H1 (cell line): ENCODE measurements at regions of chr17 and their contacts with region 1.

Region 1: GRCh38 chr17:76968707-76969597 is 100.7 kb downstream of the MGAT5B start:
- DNase-seq: peak; percentile 92 to 96
- H3K4me3 ChIP-seq: peak overlapping the region; percentile 43 to 62 (median 49)
- H3K27ac ChIP-seq: peak overlapping the region; percentile 87
- H3K4me1 ChIP-seq: peaks cover 8 to 25% (median 15%) of the 10 kb centered on the region in 4 experiments
- H3K27me3 ChIP-seq: 0 out of 7 replicates have a peak, but pooled peaks cover 0 to 2% (median 0%) of the 10 kb centered on the region in 4 experiments
- CTCF ChIP-seq: no peak
- EP300 ChIP-seq: peak in 1 of 2 experiments; percentile 75; a peak in 1 of 3 replicates
- POLR2A ChIP-seq: peak in 1 of 2 experiments; percentile 88; a peak in 2 of 3 replicates
- RAD21 ChIP-seq: peak in 1 of 2 experiments; percentile 0; a peak in 1 of 4 replicates

Region 2: GRCh38 chr17:76957678-76958464 is 11.1 kb before region 1 on chr17:
- CTCF ChIA-PET with region 1: interaction called, 4 read pairs
- POLR2A ChIA-PET with region 1: interaction called, 11 read pairs
- DNase-seq: no peak
- H3K4me3 ChIP-seq: no peak overlapping the region
- H3K27ac ChIP-seq: no peak overlapping the region
- H3K4me1 ChIP-seq: peaks cover 0 to 17% (median 11%) of the 10 kb centered on the region in 4 experiments; a peak in 6 of 7 replicates
- H3K27me3 ChIP-seq: no peaks in the 10 kb centered on the region
- CTCF ChIP-seq: no peak
- EP300 ChIP-seq: no peak
- POLR2A ChIP-seq: no peak
- RAD21 ChIP-seq: no peak

Region 3: GRCh38 chr17:76982408-76983074 is 13.6 kb after region 1 on chr17:
- CTCF ChIA-PET with region 1: interaction called, 7 read pairs
- POLR2A ChIA-PET with region 1: interaction called, 18 read pairs
- DNase-seq: no peak
- H3K4me3 ChIP-seq: no peak overlapping the region
- H3K27ac ChIP-seq: no peak overlapping the region
- H3K4me1 ChIP-seq: peaks cover 2 to 10% (median 5%) of the 10 kb centered on the region in 4 experiments; a peak in 6 of 7 replicates
- H3K27me3 ChIP-seq: peaks cover 0 to 2% (median 0%) of the 10 kb centered on the region in 4 experiments; a peak in 3 of 7 replicates
- CTCF ChIP-seq: no peak
- EP300 ChIP-seq: no peak
- POLR2A ChIP-seq: no peak
- RAD21 ChIP-seq: no peak

Region 4: DNA sequence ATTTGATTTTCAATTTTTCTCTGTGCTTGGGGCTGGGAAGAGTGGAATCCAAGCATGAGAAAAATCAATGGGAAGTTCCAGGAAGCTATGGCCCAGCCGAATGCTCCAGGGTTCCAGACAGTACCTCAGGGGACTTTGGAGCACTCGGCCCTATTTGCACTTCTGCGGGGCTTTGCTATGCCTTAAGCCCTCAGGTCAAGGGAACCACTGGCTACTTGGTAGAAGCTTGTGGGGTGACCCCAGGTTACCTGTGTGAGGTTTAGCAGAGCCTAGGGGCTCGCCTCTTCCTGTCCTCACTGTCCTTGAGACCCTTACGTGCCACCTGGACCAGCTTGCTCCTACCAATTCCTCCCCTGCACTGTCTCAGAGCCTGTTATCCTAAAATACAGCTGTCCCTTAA is 20.6 kb after region 1 on chr17:
- CTCF ChIA-PET with region 1: interaction called, 3 read pairs
- POLR2A ChIA-PET with region 1: interaction called, 15 read pairs
- DNase-seq: no peak
- H3K4me3 ChIP-seq: no peak overlapping the region
- H3K27ac ChIP-seq: no peak overlapping the region
- H3K4me1 ChIP-seq: peaks cover 0 to 5% (median 3%) of the 10 kb centered on the region in 4 experiments; a peak in 6 of 7 replicates
- H3K27me3 ChIP-seq: no peaks in the 10 kb centered on the region
- CTCF ChIP-seq: no peak
- EP300 ChIP-seq: no peak
- POLR2A ChIP-seq: no peak
- RAD21 ChIP-seq: no peak